Testis (tissue), 5 donors: ENCODE measurements at regions of chr22 and their contacts with region 1.

Region 1: GRCh38 chr22:28009272-28009827 is 90.3 kb upstream of the PITPNB start:
- DNase-seq: peak; percentile 83
- H3K4me3 ChIP-seq: no peak overlapping the region
- H3K27ac ChIP-seq: no peak overlapping the region
- H3K4me1 ChIP-seq: no peaks in the 10 kb centered on the region
- H3K27me3 ChIP-seq: no peaks in the 10 kb centered on the region
- CTCF ChIP-seq: peak; percentile 74 to 87 (median 84)
- POLR2A ChIP-seq: no peak

Region 2: GRCh38 chr22:27705408-27706080 is 303.8 kb before region 1 on chr22:
- intact Hi-C with region 1: no loop called
- DNase-seq: no peak
- H3K4me3 ChIP-seq: no peak overlapping the region
- H3K27ac ChIP-seq: no peak overlapping the region
- H3K4me1 ChIP-seq: no peaks in the 10 kb centered on the region
- H3K27me3 ChIP-seq: no peaks in the 10 kb centered on the region
- CTCF ChIP-seq: no peak
- POLR2A ChIP-seq: no peak

Region 3: DNA sequence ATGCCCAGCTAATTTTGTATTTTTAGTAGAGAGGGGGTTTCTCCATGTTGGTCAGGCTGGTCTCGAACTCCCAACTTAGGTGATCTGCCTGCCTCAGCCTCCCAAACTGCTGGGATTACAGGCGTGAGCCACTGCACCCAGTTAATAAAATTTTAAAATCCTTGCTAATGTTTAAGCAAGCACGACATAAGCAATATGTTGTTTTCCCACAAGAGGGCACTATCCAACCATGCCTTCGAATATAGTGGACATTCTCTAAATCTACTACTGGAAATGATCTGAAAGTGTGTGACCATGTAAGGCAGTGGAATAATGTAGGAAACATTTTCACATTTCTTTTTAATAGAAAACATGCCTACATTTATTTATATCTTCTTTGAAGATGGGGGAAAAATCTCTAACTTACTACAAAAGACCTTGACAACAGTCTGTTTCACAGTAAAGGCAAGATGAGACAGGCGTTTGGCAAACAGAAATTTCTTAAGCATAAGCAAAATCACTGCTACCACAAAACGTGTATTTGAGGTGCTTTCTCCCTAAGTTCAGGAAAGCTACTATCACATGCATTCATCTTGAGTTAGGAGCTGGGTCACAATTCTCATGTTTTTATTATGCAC is 128.5 kb before region 1 on chr22:
- intact Hi-C with region 1: loop called (anchors 5 kb)
- DNase-seq: peak; percentile 74
- H3K4me3 ChIP-seq: no peak overlapping the region
- H3K27ac ChIP-seq: peak overlapping the region; percentile 57 to 78
- H3K4me1 ChIP-seq: peaks cover 33% of the 10 kb centered on the region
- H3K27me3 ChIP-seq: no peaks in the 10 kb centered on the region
- CTCF ChIP-seq: peak; percentile 77 to 80 (median 78)
- POLR2A ChIP-seq: no peak

Region 4: GRCh38 chr22:28105413-28105812 is 96.1 kb after region 1 on chr22:
- intact Hi-C with region 1: no loop called
- DNase-seq: no peak
- H3K4me3 ChIP-seq: no peak overlapping the region
- H3K27ac ChIP-seq: no peak overlapping the region
- H3K4me1 ChIP-seq: no peaks in the 10 kb centered on the region
- H3K27me3 ChIP-seq: no peaks in the 10 kb centered on the region
- CTCF ChIP-seq: no peak
- POLR2A ChIP-seq: no peak

Region 5: DNA sequence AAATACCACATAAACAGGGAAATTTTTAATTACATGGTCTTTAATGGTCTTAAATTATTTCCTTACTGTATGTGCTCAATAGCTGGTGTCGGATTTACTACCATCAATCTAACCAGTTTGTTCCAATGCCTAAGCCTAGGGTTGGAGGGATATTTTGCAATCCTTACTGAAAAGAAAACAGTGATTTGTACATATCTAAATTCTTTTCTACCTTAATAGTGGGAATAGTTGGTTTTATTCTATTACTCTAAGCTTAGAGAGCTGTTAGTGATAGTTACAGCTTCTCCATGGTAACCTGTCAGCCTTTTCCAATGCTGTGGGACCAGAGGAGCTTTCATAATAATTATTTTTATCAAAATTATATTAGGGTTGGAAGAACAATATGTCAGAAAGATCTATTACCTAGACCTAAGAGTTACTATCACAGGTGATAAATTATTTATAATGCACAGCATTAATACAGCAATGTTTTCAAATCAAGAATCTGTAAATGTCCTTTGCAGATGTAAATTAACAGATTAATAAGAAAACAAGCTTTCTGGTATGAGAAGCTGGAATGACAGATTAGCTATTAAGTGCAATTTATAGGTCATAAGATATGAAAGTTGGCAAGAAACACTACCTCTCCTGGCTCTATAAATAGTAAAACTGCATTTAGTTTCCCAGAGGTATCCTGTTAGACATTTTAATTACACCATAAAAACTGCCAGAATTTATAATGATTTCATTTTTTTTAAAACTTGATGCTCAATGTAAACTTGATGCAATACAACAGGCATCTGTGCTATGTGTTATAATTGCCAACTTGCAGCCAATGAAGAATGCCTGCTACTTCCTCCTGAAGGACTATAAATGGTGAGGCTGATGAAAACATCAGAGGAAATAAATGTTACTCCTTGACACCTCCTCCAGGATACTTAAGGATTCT is 171.7 kb after region 1 on chr22:
- intact Hi-C with region 1: no loop called
- DNase-seq: no peak
- H3K4me3 ChIP-seq: no peak overlapping the region
- H3K27ac ChIP-seq: no peak overlapping the region
- H3K4me1 ChIP-seq: no peaks in the 10 kb centered on the region
- H3K27me3 ChIP-seq: no peaks in the 10 kb centered on the region
- CTCF ChIP-seq: no peak
- POLR2A ChIP-seq: no peak